Naive thymus-derived CD4-positive, alpha-beta T cell (primary cell): ENCODE measurements at regions of chr2 and their contacts with region 1.

Region 1: GRCh38 chr2:149597668-149598326 is 10.2 kb upstream of the MMADHC start:
- DNase-seq: peak in 8 of 9 donors; percentile 34 to 78 (median 68)
- ATAC-seq: peak; percentile 97
- H3K4me3 ChIP-seq: no peak overlapping the region
- H3K4me3 Mint-ChIP-seq: peak overlapping the region in 8 of 10 donors; percentile 6 to 63 (median 38)
- H3K27ac ChIP-seq: no peak overlapping the region
- H3K27ac Mint-ChIP-seq: peak overlapping the region in 4 of 9 donors; percentile 44 to 67 (median 52)
- H3K4me1 ChIP-seq: no peaks in the 10 kb centered on the region
- H3K4me1 Mint-ChIP-seq: peaks cover 7 to 22% (median 17%) of the 10 kb centered on the region in 7 donors
- H3K27me3 ChIP-seq: no peaks in the 10 kb centered on the region
- H3K27me3 Mint-ChIP-seq: peaks cover 0 to 22% (median 13%) of the 10 kb centered on the region in 5 donors

Region 2: DNA sequence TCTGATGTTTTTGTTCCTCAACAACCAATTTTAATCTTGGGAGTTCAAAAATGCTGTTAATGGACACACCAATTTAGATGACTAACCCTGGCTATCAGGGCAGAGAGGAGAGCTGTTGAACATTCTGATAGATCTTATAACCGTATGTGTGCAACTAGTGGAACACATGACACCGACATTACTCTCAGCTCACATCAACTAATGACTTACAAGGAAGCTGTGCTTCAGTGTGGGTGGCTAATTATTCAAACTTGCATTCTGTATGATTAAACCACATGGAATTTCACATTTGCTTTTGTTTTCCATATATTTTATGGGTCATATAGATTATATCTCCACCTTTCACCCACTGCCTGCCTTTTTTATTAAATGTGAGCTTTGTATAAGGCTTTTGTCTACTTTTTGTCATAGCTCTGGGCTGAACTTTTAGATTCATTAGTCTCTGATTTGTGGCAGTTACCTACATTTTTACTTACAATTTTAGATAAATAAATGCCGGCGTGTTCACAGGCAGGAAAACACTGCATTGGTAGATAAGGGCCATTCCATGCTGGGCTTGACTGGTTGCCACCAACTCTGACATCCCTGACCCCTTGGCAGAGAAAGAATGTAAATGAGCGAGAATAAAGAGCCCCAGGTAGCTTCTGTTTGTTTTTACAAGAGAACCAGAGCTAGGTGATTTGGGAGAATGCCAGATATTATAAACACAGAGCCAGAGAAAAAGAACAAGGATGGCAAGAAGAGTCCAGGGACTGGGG is 231.8 kb before region 1 on chr2:
- CTCF ChIA-PET with region 1: no interaction called
- POLR2A ChIA-PET with region 1: no interaction called
- intact Hi-C with region 1: no loop called
- DNase-seq: no peak
- ATAC-seq: no peak
- H3K4me3 ChIP-seq: no peak overlapping the region
- H3K4me3 Mint-ChIP-seq: no peak overlapping the region
- H3K27ac ChIP-seq: no peak overlapping the region
- H3K27ac Mint-ChIP-seq: no peak overlapping the region
- H3K4me1 ChIP-seq: no peaks in the 10 kb centered on the region
- H3K4me1 Mint-ChIP-seq: peaks cover 0 to 2% (median 0%) of the 10 kb centered on the region in 7 donors
- H3K27me3 ChIP-seq: no peaks in the 10 kb centered on the region
- H3K27me3 Mint-ChIP-seq: peaks cover 9 to 52% (median 31%) of the 10 kb centered on the region in 5 donors

Region 3: DNA sequence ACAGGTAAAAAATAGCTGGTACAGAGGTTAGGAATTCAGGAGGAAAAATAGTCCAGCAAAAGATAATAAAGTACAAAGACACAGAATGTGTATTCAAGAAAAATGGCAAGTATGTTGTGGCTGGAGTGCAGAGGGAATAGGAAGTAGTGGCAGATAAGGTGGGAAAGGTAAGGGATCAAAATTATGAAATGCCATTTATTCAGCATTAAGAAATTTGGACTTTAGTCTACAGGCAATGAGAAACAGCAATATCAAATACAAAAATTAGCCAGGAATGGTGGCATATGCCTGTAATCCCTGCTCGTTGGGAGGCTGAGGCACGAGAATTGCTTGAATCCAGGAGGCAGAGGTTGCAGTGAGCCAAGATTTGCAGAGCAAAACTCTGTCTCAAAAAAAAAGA is 20.5 kb before region 1 on chr2:
- CTCF ChIA-PET with region 1: no interaction called
- POLR2A ChIA-PET with region 1: no interaction called
- intact Hi-C with region 1: no loop called
- DNase-seq: no peak
- ATAC-seq: no peak
- H3K4me3 ChIP-seq: no peak overlapping the region
- H3K4me3 Mint-ChIP-seq: peak overlapping the region in 4 of 10 donors; percentile 2 to 11 (median 6)
- H3K27ac ChIP-seq: no peak overlapping the region
- H3K27ac Mint-ChIP-seq: peak overlapping the region in 8 of 9 donors; percentile 2 to 77 (median 34)
- H3K4me1 ChIP-seq: peaks cover 7 to 11% of the 10 kb centered on the region in 2 donors
- H3K4me1 Mint-ChIP-seq: peaks cover 21 to 70% (median 51%) of the 10 kb centered on the region in 7 donors
- H3K27me3 ChIP-seq: no peaks in the 10 kb centered on the region
- H3K27me3 Mint-ChIP-seq: no peaks in the 10 kb centered on the region

Region 4: GRCh38 chr2:149587220-149587949 is 10.4 kb before region 1 on chr2 and contains the start of gene MMADHC:
- CTCF ChIA-PET with region 1: interaction called, 5 read pairs
- POLR2A ChIA-PET with region 1: interaction called, 5 read pairs
- intact Hi-C with region 1: loop called in 1 of 2 experiments (anchors 1 kb)
- DNase-seq: peak; percentile 83 to 93 (median 91)
- ATAC-seq: peak; percentile 98
- H3K4me3 ChIP-seq: peak within 1 kb of the TSS; percentile 97
- H3K4me3 Mint-ChIP-seq: peak within 1 kb of the TSS; percentile 95 to 99 (median 97)
- H3K27ac ChIP-seq: peak within 1 kb of the TSS; percentile 93
- H3K27ac Mint-ChIP-seq: peak within 1 kb of the TSS; percentile 95 to 100 (median 99)
- H3K4me1 ChIP-seq: peaks cover 23 to 39% of the 10 kb centered on the region in 2 donors
- H3K4me1 Mint-ChIP-seq: peaks cover 27 to 58% (median 50%) of the 10 kb centered on the region in 7 donors
- H3K27me3 ChIP-seq: no peaks in the 10 kb centered on the region
- H3K27me3 Mint-ChIP-seq: peaks cover 22 to 30% (median 30%) of the 10 kb centered on the region in 5 donors
- total RNA-seq, gene MMADHC: 53.3 to 93.4 (median 66.6) TPM

Region 5: DNA sequence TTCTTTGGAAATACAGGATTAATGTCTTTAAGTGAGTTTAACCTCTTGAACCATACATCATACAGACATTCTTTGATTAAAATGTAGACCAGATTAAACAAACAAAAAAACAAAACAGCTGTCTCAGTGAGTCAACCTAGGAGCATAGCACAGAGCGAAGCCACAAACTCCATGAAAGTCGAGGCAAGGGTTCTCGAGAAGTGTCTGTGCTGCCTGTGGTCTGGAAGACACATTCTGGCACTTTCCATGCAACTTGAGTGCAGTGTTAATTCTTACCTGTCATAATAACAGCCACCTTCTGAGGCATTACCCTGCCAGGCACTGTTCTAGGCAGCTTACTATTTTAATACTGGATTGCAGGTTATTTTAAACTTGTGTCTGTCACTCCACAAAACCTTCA is 425.2 kb after region 1 on chr2:
- CTCF ChIA-PET with region 1: no interaction called
- POLR2A ChIA-PET with region 1: no interaction called
- intact Hi-C with region 1: loop called in 1 of 2 experiments (anchors 5 kb)
- DNase-seq: peak in 5 of 9 donors; percentile 16 to 46 (median 27)
- ATAC-seq: peak; percentile 42
- H3K4me3 ChIP-seq: no peak overlapping the region
- H3K4me3 Mint-ChIP-seq: no peak overlapping the region
- H3K27ac ChIP-seq: no peak overlapping the region
- H3K27ac Mint-ChIP-seq: no peak overlapping the region
- H3K4me1 ChIP-seq: no peaks in the 10 kb centered on the region
- H3K4me1 Mint-ChIP-seq: no peaks in the 10 kb centered on the region
- H3K27me3 ChIP-seq: no peaks in the 10 kb centered on the region
- H3K27me3 Mint-ChIP-seq: no peaks in the 10 kb centered on the region

Region 6: DNA sequence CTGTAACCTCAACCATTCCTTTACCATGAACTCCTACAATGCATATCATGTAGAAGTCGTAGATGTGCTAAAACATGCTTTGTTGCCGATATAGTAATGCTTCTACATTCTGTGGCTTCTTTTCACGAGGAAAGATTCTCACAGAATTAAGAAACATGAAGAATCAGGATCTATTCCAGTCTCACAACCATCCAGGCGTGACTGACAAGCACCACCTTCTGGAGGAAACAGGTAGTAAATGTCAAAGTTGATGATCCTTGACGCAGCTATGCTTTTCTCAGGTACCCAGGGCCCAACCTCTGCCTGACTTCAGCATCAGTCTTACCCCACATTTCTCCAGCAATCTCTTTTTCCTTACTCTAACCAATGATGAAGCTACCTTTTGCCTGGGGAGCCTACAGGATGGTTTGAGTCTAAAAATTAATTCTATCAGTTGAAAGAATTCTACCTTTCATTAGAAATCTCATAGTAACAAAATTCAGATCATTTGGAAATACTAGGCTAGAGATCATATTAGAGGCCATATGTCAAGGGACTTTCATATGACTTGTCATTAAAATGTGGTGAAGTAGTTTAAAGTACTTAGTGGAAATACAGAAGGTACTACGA is 1013.0 kb after region 1 on chr2:
- CTCF ChIA-PET with region 1: no interaction called
- POLR2A ChIA-PET with region 1: no interaction called
- intact Hi-C with region 1: loop called in 1 of 2 experiments (anchors 1 kb)
- DNase-seq: no peak
- ATAC-seq: no peak
- H3K4me3 ChIP-seq: no peak overlapping the region
- H3K4me3 Mint-ChIP-seq: no peak overlapping the region
- H3K27ac ChIP-seq: no peak overlapping the region
- H3K27ac Mint-ChIP-seq: no peak overlapping the region
- H3K4me1 ChIP-seq: no peaks in the 10 kb centered on the region
- H3K4me1 Mint-ChIP-seq: no peaks in the 10 kb centered on the region
- H3K27me3 ChIP-seq: no peaks in the 10 kb centered on the region
- H3K27me3 Mint-ChIP-seq: peaks cover 0 to 7% (median 4%) of the 10 kb centered on the region in 5 donors

Region 7: GRCh38 chr2:151238527-151239487 is 1641.0 kb after region 1 on chr2:
- CTCF ChIA-PET with region 1: interaction called, 31 read pairs
- POLR2A ChIA-PET with region 1: no interaction called
- intact Hi-C with region 1: loop called (anchors 1 kb)
- DNase-seq: peak in 6 of 9 donors; percentile 28 to 55 (median 46)
- ATAC-seq: peak; percentile 81
- H3K4me3 ChIP-seq: no peak overlapping the region
- H3K4me3 Mint-ChIP-seq: no peak overlapping the region
- H3K27ac ChIP-seq: no peak overlapping the region
- H3K27ac Mint-ChIP-seq: peak overlapping the region in 1 of 9 donors; percentile 32
- H3K4me1 ChIP-seq: no peaks in the 10 kb centered on the region
- H3K4me1 Mint-ChIP-seq: no peaks in the 10 kb centered on the region
- H3K27me3 ChIP-seq: no peaks in the 10 kb centered on the region
- H3K27me3 Mint-ChIP-seq: peaks cover 0 to 13% (median 0%) of the 10 kb centered on the region in 5 donors